ENCODE measurements at regions of chr5 and their contacts with region 1.

Region 1: DNA sequence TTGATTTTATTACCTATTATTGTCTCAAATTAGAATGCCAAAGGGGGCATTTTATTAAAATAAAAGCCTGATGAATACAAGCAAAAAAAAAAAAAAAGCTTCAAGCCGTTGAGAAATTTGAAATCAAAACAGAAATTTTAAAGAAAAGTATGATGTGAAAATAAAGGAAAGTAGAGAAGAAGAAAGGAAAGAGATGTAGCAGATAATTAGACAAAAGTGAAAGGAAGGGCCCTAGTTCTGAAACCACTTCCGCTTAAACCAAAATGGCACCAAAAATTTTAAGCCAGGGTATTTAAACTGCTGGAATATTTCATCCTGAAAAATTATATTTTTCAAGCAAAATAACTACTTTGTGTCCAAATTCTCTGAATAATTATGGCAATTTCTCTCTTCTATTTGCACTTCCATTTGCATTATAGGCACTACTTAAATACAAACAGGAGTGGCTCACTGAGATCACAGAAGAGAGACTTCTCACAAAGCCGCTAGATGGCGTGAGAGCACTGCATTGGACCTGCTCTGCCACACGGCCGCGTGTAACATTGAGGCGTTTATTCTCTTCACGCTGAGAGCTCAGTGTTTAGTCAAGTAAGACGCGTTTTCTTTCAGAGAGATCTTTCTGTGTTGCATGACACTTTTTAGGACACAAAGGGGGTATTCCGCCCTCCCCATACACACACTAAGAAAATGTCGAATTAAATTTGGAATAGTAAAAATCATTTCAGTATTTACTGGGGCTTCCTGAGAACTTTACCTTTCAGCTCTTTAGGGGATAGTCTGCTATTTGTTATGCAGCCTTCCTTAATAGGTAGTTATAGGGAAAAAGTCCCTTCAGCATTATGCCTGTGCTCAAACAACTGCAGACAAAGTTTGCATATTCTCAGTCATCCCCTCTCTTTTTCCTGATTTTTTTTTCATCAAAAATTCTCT is 368.4 kb upstream of the CCNH start:
- DNase-seq: peak; percentile 80
- ATAC-seq: peak; percentile 94 to 97

Region 2: GRCh38 chr5:87722286-87722685 is 58.8 kb before region 1 on chr5:
- intact Hi-C with region 1: no loop called
- DNase-seq: no peak
- ATAC-seq: no peak

Region 3: GRCh38 chr5:88130211-88130815 is 349.2 kb after region 1 on chr5:
- intact Hi-C with region 1: loop called in 1 of 2 experiments (anchors 10 kb)
- DNase-seq: no peak
- ATAC-seq: no peak

Region 4: GRCh38 chr5:88680253-88681132 is 899.4 kb after region 1 on chr5:
- intact Hi-C with region 1: loop called (anchors 1 to 5 kb)
- DNase-seq: peak; percentile 69
- ATAC-seq: peak; percentile 91 to 96

Region 5: GRCh38 chr5:88690409-88691229 is 909.5 kb after region 1 on chr5:
- intact Hi-C with region 1: loop called in 1 of 2 experiments (anchors 2 kb)
- DNase-seq: peak; percentile 72
- ATAC-seq: peak; percentile 84 to 91